Motor neuron (in vitro differentiated cells): ENCODE measurements at regions of chr2 and their contacts with region 1.

Region 1: DNA sequence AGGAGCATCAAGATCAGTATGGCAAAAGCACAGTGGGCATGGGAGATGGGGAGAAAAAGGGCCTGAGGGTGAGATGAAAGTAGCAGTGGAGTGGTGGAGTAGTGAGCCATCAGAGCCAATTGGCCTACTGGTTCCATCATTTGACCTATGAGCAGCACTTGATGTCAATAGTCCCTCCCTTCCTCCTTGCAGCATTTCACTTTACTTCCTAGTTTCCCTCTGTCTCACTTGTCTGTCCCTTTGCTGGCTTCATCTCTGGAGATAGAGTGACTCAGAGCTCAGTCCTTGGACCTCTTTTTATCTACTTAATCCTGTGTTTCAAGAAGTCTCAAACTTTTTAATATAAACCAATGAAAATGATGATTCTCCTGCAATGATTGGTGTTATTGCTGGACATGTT is 32.1 kb downstream of the FBXO48 start:
- ATAC-seq: no peak
- H3K4me3 ChIP-seq: no peak overlapping the region
- H3K27ac ChIP-seq: no peak overlapping the region
- H3K4me1 ChIP-seq: no peaks in the 10 kb centered on the region

Region 2: DNA sequence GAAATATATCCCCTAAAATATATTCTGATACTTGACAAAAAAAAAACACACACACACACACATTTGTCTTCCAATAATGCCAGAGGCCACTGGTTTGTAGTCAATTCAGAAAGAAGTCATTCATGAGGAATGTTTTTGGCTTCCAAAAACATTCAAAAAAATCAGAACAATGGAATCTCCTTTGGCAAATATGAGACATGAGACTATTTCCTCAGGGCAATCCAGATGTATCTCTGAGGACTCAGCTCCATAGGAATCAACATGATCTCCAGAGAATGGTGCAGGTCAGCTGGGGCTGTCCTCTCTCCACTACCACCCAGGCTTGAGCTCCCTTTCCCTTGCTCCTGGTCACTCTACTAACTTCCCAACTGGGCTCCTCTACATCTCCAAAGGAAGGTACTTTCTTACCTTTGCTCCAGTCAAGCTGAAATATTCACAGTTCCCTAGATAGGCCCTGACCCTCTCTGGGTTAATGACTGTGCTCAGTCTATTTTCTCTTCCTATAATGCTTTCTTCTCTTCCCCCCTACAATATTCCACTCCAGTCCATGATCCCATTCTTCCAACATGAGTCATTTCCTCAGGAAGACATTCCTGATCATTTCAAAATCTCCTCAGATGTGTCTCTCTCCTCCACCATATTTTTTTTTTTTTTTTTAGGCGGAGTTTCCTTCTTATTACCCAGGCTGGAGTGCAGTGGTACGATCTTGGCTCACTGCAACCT is 517.5 kb before region 1 on chr2:
- in situ Hi-C with region 1: no loop called
- ATAC-seq: peak in 3 of 8 experiments; percentile 48 to 77 (median 50)
- H3K4me3 ChIP-seq: no peak overlapping the region
- H3K27ac ChIP-seq: no peak overlapping the region
- H3K4me1 ChIP-seq: peaks cover 18 to 29% of the 10 kb centered on the region in 2 donors

Region 3: GRCh38 chr2:67965246-67965645 is 469.7 kb before region 1 on chr2:
- in situ Hi-C with region 1: no loop called
- ATAC-seq: no peak
- H3K4me3 ChIP-seq: no peak overlapping the region
- H3K27ac ChIP-seq: no peak overlapping the region
- H3K4me1 ChIP-seq: no peaks in the 10 kb centered on the region

Region 4: DNA sequence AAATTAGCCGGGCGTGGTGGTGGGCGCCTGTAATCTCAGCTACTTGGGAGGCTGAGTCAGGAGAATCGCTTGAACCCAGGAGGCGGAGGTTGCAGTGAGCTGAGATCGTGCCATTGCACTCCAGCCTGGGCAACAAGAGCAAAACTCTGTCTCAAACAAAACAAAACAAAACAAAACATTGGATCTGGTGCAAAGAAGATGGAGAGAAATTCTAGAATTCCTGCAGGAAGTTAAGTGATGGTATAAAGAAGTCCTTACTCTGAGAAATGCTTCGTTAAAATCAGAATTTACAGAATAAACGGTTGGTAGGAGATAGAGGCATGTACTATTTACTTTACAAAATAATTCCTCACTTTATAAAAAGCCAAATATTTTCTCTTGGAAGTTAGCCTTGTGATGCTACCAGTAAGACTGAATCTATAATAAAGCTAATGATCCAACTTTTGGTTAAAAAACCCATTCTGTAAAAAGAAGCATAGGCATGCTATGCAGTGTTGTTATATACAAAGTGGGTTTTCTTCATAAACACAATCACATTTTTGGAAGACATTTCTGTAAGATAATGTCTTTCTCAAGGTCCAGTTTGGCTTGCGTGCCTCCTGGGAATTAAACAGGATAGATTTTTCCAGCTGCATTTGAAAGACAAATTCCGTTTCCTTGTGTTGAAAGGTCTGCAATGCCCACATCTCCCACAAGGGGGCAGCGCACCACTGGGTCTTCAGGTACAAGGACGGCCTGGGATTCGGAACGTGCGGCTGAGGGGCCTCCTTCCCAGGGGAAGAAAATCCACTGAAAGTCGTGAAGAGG is 312.9 kb before region 1 on chr2:
- in situ Hi-C with region 1: loop called in 5 of 9 experiments (anchors 10 to 25 kb)
- ATAC-seq: peak; percentile 63 to 84 (median 72)
- H3K4me3 ChIP-seq: no peak overlapping the region
- H3K27ac ChIP-seq: no peak overlapping the region
- H3K4me1 ChIP-seq: no peaks in the 10 kb centered on the region

Region 5: GRCh38 chr2:68362069-68362468 is 72.9 kb before region 1 on chr2:
- in situ Hi-C with region 1: loop called in 1 of 9 experiments (anchors 10 kb)
- ATAC-seq: peak in 3 of 8 experiments; percentile 64 to 72 (median 69)
- H3K4me3 ChIP-seq: no peak overlapping the region
- H3K27ac ChIP-seq: no peak overlapping the region
- H3K4me1 ChIP-seq: peaks cover 8 to 10% of the 10 kb centered on the region in 2 donors